Cardiac septum (tissue), 1 donor: ENCODE measurements at regions of chr7 and their contacts with region 1.

Region 1: DNA sequence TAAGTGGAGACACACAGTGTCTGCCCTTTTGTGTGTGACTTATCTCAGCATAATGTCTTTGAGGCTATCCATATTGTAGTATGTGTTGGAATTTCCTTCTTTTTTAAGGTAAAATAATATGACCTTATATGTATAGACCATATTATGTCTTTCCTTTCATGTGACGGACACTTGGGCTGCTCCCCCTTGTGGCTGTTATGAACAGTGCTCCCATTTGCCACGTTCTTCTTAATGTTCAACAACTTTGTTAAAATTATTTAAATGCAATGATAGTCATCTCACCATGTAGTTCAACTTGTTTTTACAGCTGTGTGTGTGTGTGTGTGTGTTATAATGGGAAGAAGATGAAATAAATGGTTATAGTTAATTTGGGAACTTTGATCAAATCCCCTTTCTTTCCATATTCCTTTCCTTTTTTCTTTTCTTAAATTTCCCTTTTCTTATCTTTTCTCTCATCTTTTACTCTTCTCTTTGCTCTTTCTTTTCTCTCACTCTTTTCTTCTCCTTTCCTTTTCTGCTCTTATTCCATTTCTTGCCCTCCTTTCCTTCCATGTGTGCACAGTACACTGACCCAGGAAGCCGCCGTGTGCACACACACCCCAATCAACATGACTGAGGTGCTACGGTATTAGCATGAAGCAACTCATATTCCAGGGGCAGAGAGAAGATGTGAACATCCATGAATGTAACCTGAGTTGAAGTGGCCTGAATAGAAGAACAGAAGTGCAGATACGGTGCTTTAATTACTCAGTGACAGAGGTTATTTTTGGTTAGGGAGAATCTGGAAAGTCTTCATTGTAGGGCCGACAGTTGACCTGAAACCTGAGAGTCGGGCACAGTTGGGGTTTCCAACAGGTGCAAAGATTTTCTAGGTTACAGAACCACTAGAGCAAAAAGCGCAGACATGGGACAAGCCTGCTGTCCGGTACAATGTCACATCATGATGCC is 596.7 kb downstream of the SDK1 start:
- DNase-seq: no peak

Region 2: GRCh38 chr7:2863461-2864066 is 1034.1 kb before region 1 on chr7:
- intact Hi-C with region 1: loop called (anchors 10 kb)
- DNase-seq: peak; percentile 86

Region 3: DNA sequence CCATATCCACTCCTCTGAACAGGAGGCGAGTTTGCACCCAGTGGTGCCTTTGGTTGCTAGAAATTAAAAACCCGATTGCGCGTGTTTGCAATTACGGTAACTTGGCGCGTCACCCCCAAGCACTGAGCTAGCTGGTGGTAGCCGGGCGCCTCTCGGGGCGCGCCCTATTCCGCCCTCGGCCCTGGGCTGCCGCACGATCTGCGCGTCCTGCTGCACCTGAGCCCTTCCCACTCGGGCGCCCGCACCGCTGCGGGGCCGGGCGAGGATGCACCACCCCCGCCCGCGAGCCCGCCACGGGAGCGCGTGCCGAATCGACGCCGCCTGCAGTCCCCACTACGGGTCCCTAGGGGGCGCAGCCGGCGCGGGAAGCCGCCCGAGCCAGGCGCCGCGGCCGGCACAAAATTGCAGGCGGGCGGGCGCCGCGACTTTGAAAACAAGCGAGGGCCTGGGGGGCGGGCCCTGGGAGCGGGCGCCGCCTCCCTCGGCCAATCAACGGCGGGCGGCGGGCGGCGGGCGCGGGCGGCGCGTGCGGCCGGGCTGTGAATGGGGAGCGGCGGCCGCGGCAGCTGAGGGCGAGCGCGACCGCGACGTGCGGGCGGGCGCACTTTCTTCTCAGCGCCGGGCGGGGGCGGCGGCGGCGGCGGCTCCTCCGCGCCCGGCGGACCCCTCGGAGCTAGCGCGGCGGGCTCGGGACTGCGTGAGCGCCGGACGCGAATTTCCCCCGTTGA is 596.9 kb before region 1 on chr7 and contains the start of gene SDK1:
- intact Hi-C with region 1: loop called (anchors 10 kb)
- DNase-seq: peak; percentile 92
- total RNA-seq, gene SDK1: 0.32 TPM